ENCODE measurements at regions of chr6 and their contacts with region 1.

Region 1: GRCh38 chr6:105363100-105363754 is 39.7 kb downstream of the PREP start:
- DNase-seq: peak; percentile 28
- H3K4me3 ChIP-seq: no peak overlapping the region
- H3K27ac ChIP-seq: peak overlapping the region in 1 of 2 experiments; percentile 3; a peak in 1 of 4 replicates
- H3K4me1 ChIP-seq: peaks cover 8 to 16% of the 10 kb centered on the region in 2 experiments; a peak in 3 of 4 replicates
- H3K27me3 ChIP-seq: no peaks in the 10 kb centered on the region
- CTCF ChIP-seq: peak; percentile 72
- EP300 ChIP-seq: no peak
- RAD21 ChIP-seq: peak; percentile 83

Region 2: DNA sequence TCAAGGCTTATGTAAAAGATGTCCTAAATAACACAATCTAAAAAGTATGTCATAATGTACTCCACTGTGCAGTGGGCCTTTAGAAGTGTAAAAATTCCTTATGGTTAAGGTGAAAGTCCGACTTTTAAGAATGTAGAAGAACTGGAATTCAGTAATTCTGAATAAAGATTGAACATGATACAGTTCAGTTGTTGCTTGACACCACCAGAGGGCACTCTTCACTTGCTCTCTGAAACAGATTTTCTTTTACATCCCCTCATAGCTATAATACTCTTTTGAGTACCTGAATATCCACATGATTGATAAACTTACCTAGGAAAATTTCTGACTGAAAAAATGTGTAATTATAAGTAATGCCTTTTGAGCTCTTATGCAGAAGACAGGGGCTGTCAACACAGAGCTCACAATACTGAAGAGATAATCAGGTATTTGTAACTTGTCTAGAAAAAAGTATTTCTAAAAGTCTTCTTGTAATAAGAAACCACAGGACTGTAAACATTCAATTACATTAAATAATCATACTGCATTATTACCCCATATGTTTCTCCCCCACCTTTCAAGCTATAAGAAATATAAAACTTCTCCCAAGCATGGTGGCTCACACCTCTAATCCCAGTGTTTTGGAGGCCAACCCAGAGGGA is 275.5 kb before region 1 on chr6:
- CTCF ChIA-PET with region 1: interaction called, 119 read pairs
- POLR2A ChIA-PET with region 1: no interaction called
- DNase-seq: peak; percentile 53
- H3K4me3 ChIP-seq: no peak overlapping the region; a peak in 1 of 4 replicates
- H3K27ac ChIP-seq: no peak overlapping the region
- H3K4me1 ChIP-seq: no peaks in the 10 kb centered on the region; a peak in 1 of 4 replicates
- H3K27me3 ChIP-seq: no peaks in the 10 kb centered on the region
- CTCF ChIP-seq: peak; percentile 92
- EP300 ChIP-seq: no peak
- RAD21 ChIP-seq: peak; percentile 97

Region 3: DNA sequence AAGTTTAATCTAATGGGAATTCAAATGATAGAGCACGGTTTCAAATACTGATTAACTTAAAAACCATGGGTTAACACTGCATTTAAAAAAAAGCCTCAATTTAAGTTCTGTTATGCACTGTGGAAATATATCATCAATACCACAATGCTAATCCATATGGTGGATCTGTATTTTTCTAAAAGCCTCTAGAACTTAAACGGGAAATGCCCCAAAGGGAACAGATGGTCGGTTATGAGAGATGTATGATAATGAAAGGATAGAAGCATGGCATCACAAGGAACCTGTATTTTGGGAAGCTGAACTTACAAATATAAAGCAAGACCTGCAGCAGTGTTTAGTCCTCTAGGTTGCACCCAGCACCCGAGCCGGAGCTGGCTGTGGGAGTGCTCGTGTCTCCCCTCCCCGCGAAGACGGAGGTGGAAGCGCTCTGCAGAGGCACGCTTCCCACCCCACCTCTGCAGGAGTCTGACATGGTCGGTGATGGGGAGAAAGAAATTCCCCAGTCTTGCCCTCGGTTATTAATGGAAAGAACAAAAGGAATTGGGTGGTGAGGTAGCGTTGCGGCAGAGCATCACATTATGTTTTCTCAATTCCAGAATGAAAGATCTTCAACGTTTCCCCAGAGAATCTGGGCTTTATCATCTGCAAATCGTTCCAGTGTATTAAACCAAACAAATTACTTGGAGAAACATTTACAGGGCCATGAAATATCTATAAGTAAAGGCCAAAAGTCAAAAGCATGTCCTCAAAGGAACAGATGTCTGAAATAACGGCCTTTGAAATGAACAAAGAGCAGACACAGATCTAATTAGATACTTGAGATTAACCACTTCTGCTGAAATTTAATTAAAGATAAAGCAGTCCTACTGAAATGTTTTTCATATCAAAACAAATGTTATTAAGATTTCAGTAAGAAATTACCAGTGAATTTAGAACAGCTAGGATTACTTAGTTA is 80.3 kb before region 1 on chr6:
- CTCF ChIA-PET with region 1: interaction called, 12 read pairs
- POLR2A ChIA-PET with region 1: no interaction called
- DNase-seq: peak; percentile 52
- H3K4me3 ChIP-seq: no peak overlapping the region; a peak in 1 of 4 replicates
- H3K27ac ChIP-seq: peak overlapping the region in 1 of 2 experiments; percentile 96; a peak in 2 of 4 replicates
- H3K4me1 ChIP-seq: peaks cover 0 to 28% of the 10 kb centered on the region in 2 experiments; a peak in 2 of 4 replicates
- H3K27me3 ChIP-seq: no peaks in the 10 kb centered on the region
- CTCF ChIP-seq: no peak
- EP300 ChIP-seq: peak in 1 of 2 experiments; percentile 89; a peak in 1 of 4 replicates
- RAD21 ChIP-seq: no peak

Region 4: DNA sequence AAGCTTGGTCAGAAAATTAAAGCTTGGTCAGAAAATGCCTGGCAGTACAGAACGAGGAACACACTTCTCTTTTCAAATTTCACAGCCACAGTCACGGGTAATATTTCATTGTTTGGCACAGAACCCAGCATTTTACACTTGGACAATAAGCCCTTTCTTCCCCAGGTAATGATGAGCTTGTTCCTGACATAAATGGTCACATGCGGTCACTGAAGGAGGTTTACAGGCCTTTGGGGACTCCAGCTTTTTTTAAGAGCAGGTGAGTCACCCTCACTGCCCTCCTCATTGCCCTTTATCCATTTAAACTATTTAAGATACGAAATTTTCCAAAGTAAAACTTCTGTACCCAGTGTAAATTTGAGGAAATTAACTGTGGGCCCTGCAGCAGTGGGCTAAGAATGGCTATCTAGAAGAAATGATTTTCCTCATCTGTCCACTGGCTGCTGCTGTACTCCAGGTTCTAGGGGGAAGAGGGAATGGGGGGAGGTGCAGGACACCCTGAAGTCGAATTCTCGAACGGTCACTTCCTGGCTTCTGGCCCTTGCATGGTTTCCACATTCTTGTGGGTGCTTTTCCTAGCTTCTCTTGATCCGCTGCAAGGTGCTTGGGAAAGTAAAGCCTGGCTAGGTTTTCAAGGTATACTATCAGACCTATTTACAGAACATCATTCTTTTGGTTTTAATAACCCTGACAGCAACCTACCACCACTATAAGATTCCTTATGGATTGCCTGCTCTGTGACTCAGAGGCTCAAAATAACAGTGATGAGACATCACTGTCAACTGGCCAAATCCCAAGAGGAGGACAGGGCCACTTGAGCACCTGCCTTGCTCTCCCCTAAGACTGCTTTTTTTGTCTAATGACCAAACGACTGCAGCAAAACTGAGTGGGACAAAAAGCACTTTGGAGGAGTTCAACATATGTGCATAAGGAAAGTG is 36.1 kb before region 1 on chr6:
- CTCF ChIA-PET with region 1: interaction called, 13 read pairs
- POLR2A ChIA-PET with region 1: no interaction called
- DNase-seq: no peak
- H3K4me3 ChIP-seq: no peak overlapping the region
- H3K27ac ChIP-seq: peak overlapping the region; percentile 64 to 80
- H3K4me1 ChIP-seq: peaks cover 28 to 40% of the 10 kb centered on the region in 2 experiments
- H3K27me3 ChIP-seq: no peaks in the 10 kb centered on the region
- CTCF ChIP-seq: no peak
- EP300 ChIP-seq: no peak; a peak in 1 of 4 replicates
- RAD21 ChIP-seq: no peak

Region 5: DNA sequence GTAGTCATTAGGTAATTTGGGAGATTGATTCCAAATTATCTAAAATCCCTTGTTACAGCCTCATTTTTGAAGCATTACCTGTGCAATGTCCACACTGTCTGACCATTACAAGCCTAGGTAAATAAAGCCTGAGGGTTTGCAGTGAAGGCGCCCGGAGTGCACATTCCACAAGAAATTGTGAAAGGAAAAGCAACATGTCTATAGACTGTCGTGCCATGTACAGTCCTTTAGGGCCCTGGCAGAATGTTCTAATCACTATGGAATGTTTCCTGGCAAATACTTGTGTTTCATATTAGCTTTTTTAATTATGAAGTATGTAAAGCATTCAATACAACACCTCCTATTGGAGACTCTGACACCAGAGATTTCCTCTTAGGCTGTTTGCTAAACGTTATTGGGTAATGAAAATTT is 10.8 kb after region 1 on chr6:
- CTCF ChIA-PET with region 1: interaction called, 17 read pairs
- POLR2A ChIA-PET with region 1: no interaction called
- DNase-seq: no peak
- H3K4me3 ChIP-seq: no peak overlapping the region
- H3K27ac ChIP-seq: no peak overlapping the region; a peak in 1 of 4 replicates
- H3K4me1 ChIP-seq: peaks cover 0 to 2% of the 10 kb centered on the region in 2 experiments; a peak in 3 of 4 replicates
- H3K27me3 ChIP-seq: no peaks in the 10 kb centered on the region
- CTCF ChIP-seq: no peak
- EP300 ChIP-seq: no peak
- RAD21 ChIP-seq: no peak

Region 6: DNA sequence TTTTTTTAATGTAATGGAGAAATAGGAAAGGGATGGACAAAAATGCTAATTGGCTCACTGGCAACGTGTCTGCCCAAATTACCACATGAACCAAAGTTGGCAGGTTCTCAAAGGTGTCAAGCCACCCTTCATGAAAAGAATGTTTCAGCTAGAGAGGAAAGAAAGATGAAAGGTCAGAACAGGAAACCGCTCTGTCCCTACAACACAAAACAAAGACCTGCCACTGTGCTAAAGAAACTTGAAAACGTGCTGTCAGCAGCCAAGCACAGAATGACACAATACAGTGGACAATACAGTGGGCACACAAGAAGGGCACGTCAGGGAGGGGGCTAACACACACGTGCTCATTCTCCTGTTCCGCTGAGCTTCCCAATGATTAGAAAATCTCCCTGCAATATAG is 34.8 kb after region 1 on chr6:
- CTCF ChIA-PET with region 1: interaction called, 14 read pairs
- POLR2A ChIA-PET with region 1: no interaction called
- DNase-seq: no peak
- H3K4me3 ChIP-seq: no peak overlapping the region
- H3K27ac ChIP-seq: no peak overlapping the region; a peak in 1 of 4 replicates
- H3K4me1 ChIP-seq: peaks cover 0 to 21% of the 10 kb centered on the region in 2 experiments; a peak in 2 of 4 replicates
- H3K27me3 ChIP-seq: no peaks in the 10 kb centered on the region
- CTCF ChIP-seq: no peak
- EP300 ChIP-seq: no peak
- RAD21 ChIP-seq: no peak

Region 7: GRCh38 chr6:105432797-105433196 is 69.6 kb after region 1 on chr6:
- CTCF ChIA-PET with region 1: no interaction called
- POLR2A ChIA-PET with region 1: no interaction called
- DNase-seq: no peak
- H3K4me3 ChIP-seq: no peak overlapping the region
- H3K27ac ChIP-seq: peak overlapping the region in 1 of 2 experiments; percentile 57; a peak in 2 of 4 replicates
- H3K4me1 ChIP-seq: peaks cover 0 to 23% of the 10 kb centered on the region in 2 experiments; a peak in 2 of 4 replicates
- H3K27me3 ChIP-seq: no peaks in the 10 kb centered on the region
- CTCF ChIP-seq: no peak
- EP300 ChIP-seq: peak; percentile 16 to 96; a peak in 2 of 4 replicates
- RAD21 ChIP-seq: no peak

Measured in SK-N-SH (cell line).